CD8-positive, alpha-beta T cell (primary cell): ENCODE measurements at regions of chr3 and their contacts with region 1.

Region 1: DNA sequence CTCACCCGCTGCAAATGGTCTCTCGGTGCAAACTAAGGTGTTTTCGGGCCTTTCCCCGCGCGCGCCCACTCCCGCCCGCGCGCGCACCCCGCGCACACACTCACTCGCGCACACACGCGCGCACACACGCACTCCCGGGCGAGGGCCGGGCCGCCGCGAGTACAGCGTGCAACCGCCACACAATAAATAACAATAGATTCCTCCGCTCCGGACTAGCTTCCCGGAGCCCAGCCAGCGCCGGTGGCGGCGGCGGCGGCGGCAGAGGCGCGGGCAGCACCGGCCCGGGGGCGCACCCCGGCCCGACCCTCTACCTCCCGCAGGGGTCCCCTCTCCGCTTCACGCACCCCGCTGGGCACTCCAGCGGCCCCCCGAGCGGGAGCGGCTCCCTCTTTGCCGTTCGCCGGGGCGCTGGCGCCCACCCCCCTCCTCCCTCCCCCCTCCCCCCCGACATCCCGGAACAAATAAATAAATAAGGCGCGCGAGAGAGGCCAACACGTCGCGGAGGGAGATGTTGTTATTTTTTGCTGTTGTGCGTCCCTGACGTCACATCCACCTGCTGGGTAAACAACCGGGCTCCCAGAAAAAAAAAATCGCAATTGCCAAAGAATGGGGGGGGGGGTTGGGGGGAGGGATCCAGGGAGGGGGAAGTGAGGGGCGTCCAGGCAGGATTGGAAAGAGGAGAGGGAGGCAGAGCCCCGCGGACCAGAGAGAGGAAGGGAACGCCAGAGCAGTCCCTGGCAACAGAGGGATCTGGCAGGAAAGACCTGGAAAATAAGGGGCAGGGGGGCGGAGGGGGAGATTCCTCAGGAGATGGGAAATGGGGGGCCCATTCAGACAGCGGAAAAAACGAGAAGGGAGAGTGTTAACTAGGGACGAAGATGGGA is at the start of gene FOXP1:
- DNase-seq: peak; percentile 41 to 90 (median 63)
- ATAC-seq: peak; percentile 53
- H3K4me3 ChIP-seq: peak within 1 kb of the TSS; percentile 73 to 75
- H3K4me3 Mint-ChIP-seq: peak within 1 kb of the TSS; percentile 94
- H3K27ac ChIP-seq: peak within 1 kb of the TSS; percentile 67 to 84
- H3K27ac Mint-ChIP-seq: peak within 1 kb of the TSS; percentile 97
- H3K4me1 ChIP-seq: peaks cover 14% of the 10 kb centered on the region
- H3K4me1 Mint-ChIP-seq: peaks cover 47% of the 10 kb centered on the region
- H3K27me3 ChIP-seq: no peaks in the 10 kb centered on the region
- H3K27me3 Mint-ChIP-seq: no peaks in the 10 kb centered on the region
- CTCF ChIP-seq: no peak
- total RNA-seq, gene FOXP1: 411 to 413 TPM

Region 2: DNA sequence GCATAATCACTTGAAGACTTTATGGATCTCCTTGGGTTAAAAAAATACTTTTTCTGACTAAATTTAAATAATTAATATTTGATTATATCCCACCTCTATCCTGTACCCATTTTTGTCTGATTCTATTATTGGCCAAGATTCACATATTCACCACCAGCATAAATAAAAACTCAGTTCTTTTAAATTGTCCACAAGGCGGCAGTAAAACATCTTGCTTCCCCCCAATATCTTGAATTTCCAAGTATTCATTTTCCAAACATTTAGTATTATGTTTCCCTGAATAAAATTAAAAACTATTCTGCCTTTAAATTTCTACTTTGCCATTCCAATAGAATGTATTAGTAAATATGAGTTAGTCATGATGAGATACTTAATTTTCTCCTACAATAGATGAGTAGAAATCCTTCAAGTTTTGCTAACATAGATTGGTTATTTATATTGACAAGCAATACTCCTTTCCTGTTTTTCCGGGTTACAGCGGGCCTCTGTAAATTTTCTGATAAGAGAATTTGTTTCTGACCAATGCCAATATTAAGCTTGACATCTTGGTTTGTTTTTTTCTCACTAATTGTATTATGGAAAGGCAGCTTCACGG is 1052.6 kb before region 1 on chr3:
- CTCF ChIA-PET with region 1: interaction called, 6 read pairs
- POLR2A ChIA-PET with region 1: no interaction called
- intact Hi-C with region 1: loop called (anchors 5 kb)
- DNase-seq: peak in 2 of 9 experiments; percentile 8 to 16
- ATAC-seq: no peak
- H3K4me3 ChIP-seq: no peak overlapping the region
- H3K4me3 Mint-ChIP-seq: no peak overlapping the region
- H3K27ac ChIP-seq: no peak overlapping the region
- H3K27ac Mint-ChIP-seq: no peak overlapping the region
- H3K4me1 ChIP-seq: no peaks in the 10 kb centered on the region
- H3K4me1 Mint-ChIP-seq: no peaks in the 10 kb centered on the region
- H3K27me3 ChIP-seq: no peaks in the 10 kb centered on the region
- H3K27me3 Mint-ChIP-seq: peaks cover 5% of the 10 kb centered on the region
- CTCF ChIP-seq: peak; percentile 13

Region 3: DNA sequence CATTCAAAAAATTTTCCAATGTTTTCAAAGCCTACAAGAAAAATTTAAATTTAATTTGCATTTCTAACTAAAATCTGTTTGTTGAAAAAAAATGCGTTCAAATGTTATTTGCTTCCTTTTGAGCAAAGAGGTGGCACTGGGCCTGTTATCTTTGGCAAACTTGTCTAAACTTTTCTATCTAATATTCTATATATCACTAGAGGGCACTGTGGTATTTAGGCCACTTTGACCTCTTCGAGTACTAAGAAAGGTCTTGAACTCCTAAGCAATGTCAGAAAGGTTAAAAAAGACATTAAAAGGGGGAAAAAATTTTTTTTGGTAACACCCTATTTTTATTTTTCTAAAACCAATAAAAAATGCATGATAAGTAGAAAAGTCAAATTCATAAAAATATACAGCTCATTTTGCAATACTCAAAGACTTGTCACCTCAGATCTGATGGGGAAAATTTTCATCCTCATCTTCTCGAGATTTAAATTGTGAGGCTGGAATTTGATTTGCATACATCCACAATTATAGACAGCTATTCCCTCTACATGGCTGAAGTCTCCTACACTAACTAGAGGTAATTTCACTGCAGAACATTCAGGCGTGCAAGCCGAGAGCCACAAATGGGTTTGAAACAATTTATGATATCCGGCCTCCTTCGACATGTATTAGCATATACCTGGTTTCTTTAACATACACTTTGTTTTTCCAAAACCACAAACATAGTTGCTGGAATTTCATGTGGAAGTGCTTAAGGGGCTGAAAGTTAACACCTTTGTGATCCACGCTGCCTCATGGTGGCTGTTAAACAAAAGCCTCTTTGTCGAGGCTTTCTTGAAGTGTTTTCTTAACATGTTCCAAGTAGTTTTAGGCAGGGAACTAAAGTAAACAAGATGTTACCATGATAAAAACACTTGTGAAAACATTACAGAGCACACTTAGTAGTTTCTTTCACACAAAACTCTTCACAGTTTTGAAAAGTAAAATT is 576.7 kb before region 1 on chr3:
- CTCF ChIA-PET with region 1: interaction called, 3 read pairs
- POLR2A ChIA-PET with region 1: no interaction called
- intact Hi-C with region 1: loop called (anchors 2 kb)
- DNase-seq: peak in 2 of 9 experiments; percentile 44 to 64
- ATAC-seq: no peak
- H3K4me3 ChIP-seq: no peak overlapping the region
- H3K4me3 Mint-ChIP-seq: no peak overlapping the region
- H3K27ac ChIP-seq: no peak overlapping the region
- H3K27ac Mint-ChIP-seq: peak overlapping the region; percentile 85
- H3K4me1 ChIP-seq: peaks cover 54% of the 10 kb centered on the region
- H3K4me1 Mint-ChIP-seq: peaks cover 74% of the 10 kb centered on the region
- H3K27me3 ChIP-seq: no peaks in the 10 kb centered on the region
- H3K27me3 Mint-ChIP-seq: no peaks in the 10 kb centered on the region
- CTCF ChIP-seq: peak; percentile 30

Region 4: GRCh38 chr3:71130471-71131374 is 453.1 kb before region 1 on chr3:
- CTCF ChIA-PET with region 1: interaction called, 4 read pairs
- POLR2A ChIA-PET with region 1: interaction called, 6 read pairs
- intact Hi-C with region 1: loop called (anchors 2 to 5 kb)
- DNase-seq: peak; percentile 52 to 90 (median 77)
- ATAC-seq: peak; percentile 74
- H3K4me3 ChIP-seq: peak overlapping the region; percentile 56 to 57
- H3K4me3 Mint-ChIP-seq: peak overlapping the region; percentile 87
- H3K27ac ChIP-seq: peak overlapping the region; percentile 82 to 88
- H3K27ac Mint-ChIP-seq: peak overlapping the region; percentile 93
- H3K4me1 ChIP-seq: peaks cover 57% of the 10 kb centered on the region
- H3K4me1 Mint-ChIP-seq: peaks cover 80% of the 10 kb centered on the region
- H3K27me3 ChIP-seq: no peaks in the 10 kb centered on the region
- H3K27me3 Mint-ChIP-seq: no peaks in the 10 kb centered on the region
- CTCF ChIP-seq: no peak

Region 5: DNA sequence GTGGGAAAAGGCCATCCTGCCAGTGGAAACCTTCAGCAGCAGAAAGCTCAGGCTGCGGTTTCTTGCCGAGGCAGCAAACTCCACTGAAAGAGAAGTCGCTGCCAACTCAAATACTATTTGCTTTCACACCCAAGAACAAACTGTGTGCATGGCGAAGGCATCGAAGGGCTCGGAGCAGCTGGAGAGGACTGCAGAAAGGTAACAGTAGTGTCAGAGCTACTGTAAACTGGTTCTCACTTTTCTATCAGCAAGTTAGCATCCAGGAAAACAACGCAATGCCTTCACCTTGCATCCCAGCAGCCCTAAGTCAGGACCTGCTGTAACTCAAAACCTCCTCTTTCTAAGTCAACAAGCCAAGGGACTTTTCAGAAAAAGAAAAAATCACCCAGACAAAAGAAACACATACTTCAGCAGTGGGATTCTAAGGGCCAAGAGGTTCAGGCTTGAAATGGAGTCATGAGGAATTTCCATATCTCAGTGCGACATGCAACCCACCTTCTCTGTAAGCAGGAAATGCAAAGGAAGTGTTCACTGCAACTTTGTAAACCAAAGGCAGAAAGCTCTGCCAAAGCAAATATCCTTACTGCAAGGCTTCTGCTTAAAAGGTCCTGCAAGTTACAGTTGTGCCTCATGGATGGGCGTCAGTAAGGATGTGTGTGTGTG is 193.8 kb before region 1 on chr3:
- CTCF ChIA-PET with region 1: no interaction called
- POLR2A ChIA-PET with region 1: interaction called, 3 read pairs
- intact Hi-C with region 1: loop called in 1 of 2 experiments (anchors 5 kb)
- DNase-seq: peak in 8 of 9 experiments; percentile 12 to 75 (median 34)
- ATAC-seq: peak; percentile 43
- H3K4me3 ChIP-seq: peak overlapping the region; percentile 13 to 30
- H3K4me3 Mint-ChIP-seq: peak overlapping the region; percentile 79
- H3K27ac ChIP-seq: peak overlapping the region; percentile 50 to 63
- H3K27ac Mint-ChIP-seq: peak overlapping the region; percentile 95
- H3K4me1 ChIP-seq: peaks cover 68% of the 10 kb centered on the region
- H3K4me1 Mint-ChIP-seq: peaks cover 77% of the 10 kb centered on the region
- H3K27me3 ChIP-seq: no peaks in the 10 kb centered on the region
- H3K27me3 Mint-ChIP-seq: no peaks in the 10 kb centered on the region
- CTCF ChIP-seq: no peak

Region 6: DNA sequence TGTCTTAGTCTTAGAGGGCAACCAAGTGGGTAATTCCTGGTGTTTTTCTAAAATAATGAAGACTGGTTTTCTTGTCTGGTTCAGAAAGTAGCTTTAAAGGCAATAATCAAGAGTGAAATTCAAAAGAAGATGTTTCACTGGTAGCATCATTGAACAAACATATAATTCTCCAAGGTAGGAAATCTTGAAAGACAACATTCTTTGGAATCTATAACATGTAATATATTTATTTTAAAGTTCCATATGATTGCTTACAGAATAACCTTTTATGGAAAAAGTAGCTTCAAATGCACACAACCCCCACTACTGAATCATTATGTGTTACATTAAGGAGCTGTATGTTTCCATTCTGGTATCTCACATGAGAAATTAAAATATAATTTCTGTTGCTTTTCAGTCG is 13.5 kb after region 1 on chr3:
- CTCF ChIA-PET with region 1: interaction called, 11 read pairs
- POLR2A ChIA-PET with region 1: no interaction called
- intact Hi-C with region 1: no loop called
- DNase-seq: no peak
- ATAC-seq: no peak
- H3K4me3 ChIP-seq: no peak overlapping the region
- H3K4me3 Mint-ChIP-seq: no peak overlapping the region
- H3K27ac ChIP-seq: no peak overlapping the region
- H3K27ac Mint-ChIP-seq: no peak overlapping the region
- H3K4me1 ChIP-seq: no peaks in the 10 kb centered on the region
- H3K4me1 Mint-ChIP-seq: peaks cover 8% of the 10 kb centered on the region
- H3K27me3 ChIP-seq: no peaks in the 10 kb centered on the region
- H3K27me3 Mint-ChIP-seq: no peaks in the 10 kb centered on the region
- CTCF ChIP-seq: no peak

Region 7: GRCh38 chr3:72996473-72997333 is 1412.9 kb after region 1 on chr3 and contains the start of gene PPP4R2:
- CTCF ChIA-PET with region 1: no interaction called
- POLR2A ChIA-PET with region 1: no interaction called
- intact Hi-C with region 1: loop called in 1 of 2 experiments (anchors 5 kb)
- DNase-seq: peak; percentile 83 to 97 (median 91)
- ATAC-seq: peak; percentile 87
- H3K4me3 ChIP-seq: peak within 1 kb of the TSS; percentile 82 to 96
- H3K4me3 Mint-ChIP-seq: peak within 1 kb of the TSS; percentile 86
- H3K27ac ChIP-seq: peak within 1 kb of the TSS; percentile 89 to 92
- H3K27ac Mint-ChIP-seq: peak within 1 kb of the TSS; percentile 90
- H3K4me1 ChIP-seq: peaks cover 44% of the 10 kb centered on the region
- H3K4me1 Mint-ChIP-seq: peaks cover 46% of the 10 kb centered on the region
- H3K27me3 ChIP-seq: no peaks in the 10 kb centered on the region
- H3K27me3 Mint-ChIP-seq: no peaks in the 10 kb centered on the region
- CTCF ChIP-seq: no peak
- total RNA-seq, gene PPP4R2: 77.7 to 80.4 TPM